GM13977 (cell line): ENCODE measurements at regions of chr14 and their contacts with region 1.

Region 1: DNA sequence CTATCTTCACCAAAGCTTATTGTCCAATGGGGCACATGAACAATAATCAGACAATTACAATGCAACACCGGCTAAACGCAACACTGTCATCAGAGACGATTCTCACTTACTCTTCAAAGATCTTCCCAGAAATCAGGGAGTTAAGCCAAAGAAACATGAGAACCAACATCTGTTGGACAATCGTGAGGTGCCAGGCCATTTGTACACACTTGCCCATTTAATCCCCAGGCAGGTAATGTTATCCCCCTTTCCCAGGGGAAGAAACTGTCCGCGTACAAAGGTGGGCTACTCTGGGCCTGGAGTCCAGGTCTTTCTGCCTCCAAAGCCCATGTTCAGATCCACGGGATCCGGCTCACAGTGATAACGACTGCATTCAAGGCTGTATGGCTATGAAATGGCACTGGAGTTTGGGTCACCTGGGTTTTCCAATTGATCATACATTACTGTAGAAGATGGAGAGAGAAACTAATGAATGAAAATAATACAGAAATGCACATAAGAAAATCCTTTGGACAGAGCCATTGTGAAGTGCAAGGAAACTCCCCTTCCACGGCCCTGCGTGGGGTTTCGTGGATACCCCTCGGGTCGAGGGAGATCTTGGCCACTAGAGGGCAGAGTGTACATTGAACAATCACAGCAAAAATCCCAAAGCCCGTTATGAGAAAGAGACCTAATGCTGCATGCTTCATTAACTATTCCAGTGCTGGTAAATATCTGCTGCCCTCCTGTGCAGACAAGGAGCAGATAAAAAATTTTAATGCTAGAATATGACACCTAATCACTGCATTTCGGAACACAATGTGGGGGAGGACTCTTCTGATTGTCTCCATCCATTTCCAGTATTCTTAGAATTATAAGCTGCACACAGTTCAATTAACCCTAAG is 111.4 kb downstream of the EGLN3 start:
- DNase-seq: peak; percentile 50
- CTCF ChIP-seq: peak; percentile 76

Region 2: DNA sequence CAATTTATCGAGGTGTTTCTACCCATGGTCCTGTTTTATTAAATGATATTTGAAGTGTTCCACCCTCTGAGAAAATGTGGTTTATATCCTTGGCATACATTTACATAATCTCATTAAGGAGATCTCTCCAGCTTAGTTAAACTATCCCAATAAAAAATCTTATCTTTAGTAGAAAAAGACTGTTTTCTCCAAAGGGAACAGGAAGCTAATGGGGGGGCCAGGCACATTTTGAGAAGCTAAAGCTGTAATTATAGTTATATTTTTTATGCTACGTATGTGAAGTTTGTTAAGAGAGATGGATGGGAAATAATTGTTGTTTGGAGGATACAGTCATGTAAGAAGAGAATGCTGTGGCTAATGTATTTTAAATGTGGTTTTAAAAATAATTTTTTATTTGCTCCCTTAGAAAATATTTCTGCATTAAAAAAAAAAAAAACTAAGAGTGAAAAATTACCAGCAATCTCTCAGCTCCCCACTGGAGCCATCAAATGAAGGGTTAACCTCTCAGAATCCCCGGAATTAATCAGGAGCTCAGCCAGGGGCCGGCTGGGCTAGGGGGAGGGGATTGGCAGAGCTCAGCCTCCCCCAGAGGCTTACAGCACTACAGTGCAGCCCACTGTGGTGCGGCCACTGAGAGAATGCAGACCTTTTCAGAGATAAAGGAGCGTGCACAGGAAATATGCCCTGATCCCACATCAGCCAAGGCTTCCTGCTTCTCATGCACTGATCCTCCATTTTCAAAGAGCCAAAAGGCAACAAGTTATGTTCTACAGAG is 74.4 kb before region 1 on chr14:
- in situ Hi-C with region 1: no loop called
- DNase-seq: no peak
- CTCF ChIP-seq: no peak

Region 3: DNA sequence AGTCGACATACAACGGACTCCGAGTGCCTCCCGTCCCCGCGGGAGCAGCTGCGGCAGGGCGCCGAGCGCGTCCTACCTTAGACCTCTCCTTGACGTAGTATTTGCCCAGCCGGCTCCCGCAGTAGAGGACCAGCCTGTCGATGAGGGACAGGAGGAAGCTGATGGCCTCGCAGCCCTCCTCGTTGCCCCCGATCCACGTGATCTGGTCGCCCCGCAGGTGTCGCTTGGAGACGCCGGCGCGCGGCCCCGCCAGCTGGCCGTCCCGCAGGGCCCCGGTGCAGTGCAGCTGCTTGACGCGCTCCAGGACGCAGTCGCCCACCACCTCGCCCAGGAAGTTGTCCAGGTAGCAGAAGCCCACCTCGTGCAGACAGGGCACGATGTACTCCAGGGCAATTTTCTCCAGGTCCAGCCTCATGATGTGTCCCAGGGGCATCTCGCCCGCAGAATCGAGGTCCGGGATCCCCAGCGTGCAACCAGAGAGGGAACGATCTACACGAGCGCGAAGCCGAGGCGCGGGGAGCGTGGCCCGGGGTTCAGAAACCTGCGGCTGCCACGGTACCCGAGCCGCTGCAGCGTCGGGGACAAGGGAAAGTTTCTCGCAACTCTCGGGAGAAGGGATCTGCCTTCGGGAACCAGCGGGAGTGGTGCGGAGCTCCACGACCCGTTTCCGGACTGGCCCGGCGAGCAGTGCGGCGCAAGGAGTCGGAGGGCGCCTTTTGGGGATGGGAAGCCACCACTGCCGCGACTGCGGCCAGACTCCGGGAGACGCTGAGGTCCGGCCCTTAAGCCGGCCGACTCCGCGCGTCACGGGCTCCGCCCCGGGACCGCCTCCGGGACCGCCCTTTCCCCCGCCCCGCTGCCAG is 111.1 kb after region 1 on chr14 and contains the start of gene EGLN3:
- in situ Hi-C with region 1: no loop called
- DNase-seq: peak; percentile 74
- CTCF ChIP-seq: no peak

Region 4: DNA sequence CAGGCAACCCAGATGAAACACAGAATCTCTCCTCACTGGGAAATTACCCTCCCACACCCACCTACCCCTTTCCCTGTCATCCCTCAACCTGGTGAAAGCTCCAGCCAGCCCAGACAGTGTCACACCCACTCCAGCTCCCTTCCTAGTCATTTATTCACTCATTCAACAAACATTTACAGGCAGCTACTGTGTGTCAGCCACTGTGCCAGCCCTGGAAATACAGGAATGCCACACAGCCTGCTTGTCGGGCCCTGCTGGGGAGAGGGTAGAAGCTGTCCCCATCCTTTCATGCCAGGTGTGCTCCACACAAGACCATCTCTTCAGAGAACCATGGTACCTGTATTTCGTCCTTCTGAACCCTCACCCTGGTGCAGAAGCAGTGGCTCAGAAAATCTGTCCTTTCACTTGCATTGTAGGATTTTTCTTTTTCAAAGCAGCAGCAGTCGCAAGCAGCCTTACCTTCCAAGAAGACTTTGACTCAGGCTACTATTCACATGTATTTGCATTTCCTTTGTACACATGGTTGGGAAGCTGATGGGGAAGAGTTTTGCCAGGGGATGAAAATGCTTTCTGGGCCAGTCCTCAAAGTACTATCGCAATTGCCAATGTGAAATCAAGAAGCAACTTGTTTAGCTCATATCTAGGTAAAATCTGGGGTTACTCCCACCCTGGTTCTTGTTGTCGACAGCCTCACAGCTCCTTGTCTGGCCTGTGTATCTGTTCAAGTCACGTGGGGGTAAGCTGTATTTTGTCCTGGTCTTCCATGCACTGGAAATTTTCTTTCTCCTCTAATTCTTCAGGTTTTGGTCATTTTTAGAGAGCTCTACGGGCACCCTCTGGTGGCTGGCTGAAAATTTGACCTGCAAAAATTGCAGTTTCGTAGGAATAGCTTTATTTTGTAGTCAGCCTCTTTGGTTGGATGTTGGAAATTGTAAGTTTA is 258.9 kb after region 1 on chr14:
- in situ Hi-C with region 1: loop called (anchors 25 kb)
- DNase-seq: no peak
- CTCF ChIP-seq: peak; percentile 55

Region 5: GRCh38 chr14:34227834-34228649 is 388.6 kb after region 1 on chr14:
- in situ Hi-C with region 1: loop called (anchors 25 kb)
- DNase-seq: peak; percentile 63
- CTCF ChIP-seq: peak; percentile 80